PC-9 (cell line): ENCODE measurements at regions of chr11 and their contacts with region 1.

Region 1: GRCh38 chr11:74024261-74025029 is 15.6 kb upstream of the UCP3 start:
- DNase-seq: no peak
- H3K4me3 ChIP-seq: no peak overlapping the region
- H3K27ac ChIP-seq: peak overlapping the region; percentile 68
- H3K4me1 ChIP-seq: peaks cover 52% of the 10 kb centered on the region
- H3K27me3 ChIP-seq: no peaks in the 10 kb centered on the region
- CTCF ChIP-seq: no peak

Region 2: GRCh38 chr11:74069147-74070047 is 45.0 kb after region 1 on chr11:
- CTCF ChIA-PET with region 1: no interaction called
- POLR2A ChIA-PET with region 1: no interaction called
- intact Hi-C with region 1: loop called (anchors 2 kb)
- DNase-seq: peak; percentile 69 to 100
- H3K4me3 ChIP-seq: peak overlapping the region; percentile 11; the same call in 1 of the 2 replicates
- H3K27ac ChIP-seq: peak overlapping the region; percentile 94
- H3K4me1 ChIP-seq: peaks cover 75% of the 10 kb centered on the region
- H3K27me3 ChIP-seq: no peaks in the 10 kb centered on the region
- CTCF ChIP-seq: no peak